Activated CD8-positive, alpha-beta T cell treated with anti-CD3 and anti-CD28 coated beads, Interleukin-2, amount 10 ng/mL, durations not matched to agents 7 days and 5 days (primary cell): ENCODE measurements at regions of chr5 and their contacts with region 1.

Region 1: DNA sequence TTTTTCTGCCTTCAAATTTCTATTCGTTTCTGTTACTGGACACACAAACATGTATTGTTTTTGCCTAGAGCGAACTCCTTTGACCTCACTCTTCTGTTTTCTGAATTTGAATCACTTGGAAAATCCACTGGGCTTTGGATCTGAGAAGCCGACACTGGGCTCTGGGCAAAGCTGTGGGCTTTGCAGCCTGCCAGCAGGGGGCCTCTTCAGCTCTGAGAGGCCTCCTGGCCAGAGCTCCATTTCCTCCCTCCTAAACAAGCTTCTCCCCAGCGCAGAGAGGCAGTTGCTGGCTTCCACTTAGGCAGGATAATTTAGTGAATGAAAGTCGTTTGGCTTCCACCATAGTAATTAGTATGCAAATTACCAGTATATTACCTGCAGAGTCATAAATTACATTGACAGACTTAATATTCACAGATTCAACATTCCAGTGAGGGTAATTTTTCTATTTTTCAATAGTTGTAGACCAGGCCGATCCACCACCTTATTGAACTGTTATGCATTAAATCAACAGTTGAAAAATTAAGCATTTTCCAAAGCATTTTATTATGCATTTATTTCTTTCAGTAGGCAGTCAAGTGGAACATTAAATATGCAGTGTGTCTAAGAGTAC is 104.0 kb upstream of the ZNF366 start:
- DNase-seq: peak; percentile 51
- ATAC-seq: peak; percentile 79
- H3K4me3 Mint-ChIP-seq: no peak overlapping the region
- H3K27ac Mint-ChIP-seq: no peak overlapping the region
- H3K4me1 Mint-ChIP-seq: no peaks in the 10 kb centered on the region
- H3K27me3 Mint-ChIP-seq: peaks cover 4% of the 10 kb centered on the region

Region 2: GRCh38 chr5:72565519-72566289 is 45.5 kb before region 1 on chr5:
- CTCF ChIA-PET with region 1: no interaction called
- POLR2A ChIA-PET with region 1: no interaction called
- DNase-seq: no peak
- ATAC-seq: no peak
- H3K4me3 Mint-ChIP-seq: no peak overlapping the region
- H3K27ac Mint-ChIP-seq: no peak overlapping the region
- H3K4me1 Mint-ChIP-seq: no peaks in the 10 kb centered on the region
- H3K27me3 Mint-ChIP-seq: peaks cover 13% of the 10 kb centered on the region

Region 3: DNA sequence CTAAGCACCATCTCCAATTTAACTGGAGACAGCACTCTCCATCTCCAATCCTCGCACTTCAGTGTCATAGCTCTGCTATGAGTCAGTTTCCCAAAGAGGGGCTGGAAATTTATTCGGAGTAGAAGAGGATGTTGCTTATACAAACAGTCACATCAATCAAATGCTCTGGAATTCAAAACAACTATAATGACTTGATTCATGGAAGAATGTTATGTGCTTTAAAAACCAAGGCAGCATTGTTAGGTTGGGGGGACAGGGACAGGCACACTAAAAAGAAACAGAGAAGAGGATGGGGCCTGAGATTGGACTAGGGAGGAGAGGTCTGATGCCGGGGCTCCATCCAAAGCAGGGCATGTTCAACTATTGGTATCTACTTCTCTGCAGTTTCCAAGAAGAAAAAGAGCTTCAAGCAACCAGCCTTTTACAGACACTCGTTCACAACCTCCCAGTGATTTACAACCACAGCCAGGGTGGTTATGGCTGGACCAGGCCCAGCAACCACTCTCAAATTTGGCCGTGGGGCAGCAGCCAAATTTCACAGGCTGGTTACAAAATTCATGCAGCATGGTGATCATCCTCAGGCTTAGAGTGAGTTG is 13.5 kb after region 1 on chr5:
- CTCF ChIA-PET with region 1: interaction called, 21 read pairs
- POLR2A ChIA-PET with region 1: no interaction called
- DNase-seq: no peak
- ATAC-seq: no peak
- H3K4me3 Mint-ChIP-seq: no peak overlapping the region
- H3K27ac Mint-ChIP-seq: no peak overlapping the region
- H3K4me1 Mint-ChIP-seq: no peaks in the 10 kb centered on the region
- H3K27me3 Mint-ChIP-seq: peaks cover 5% of the 10 kb centered on the region